ENCODE measurements at regions of chr13 and their contacts with region 1.

Region 1: GRCh38 chr13:81017513-81018152 is 676.7 kb upstream of the SPRY2 start:
- DNase-seq: no peak
- ATAC-seq: peak in 4 of 8 donors; percentile 44 to 67 (median 49)
- H3K4me3 ChIP-seq: peak overlapping the region in 3 of 10 donors; percentile 10 to 28 (median 20)
- H3K27ac ChIP-seq: no peak overlapping the region
- H3K4me1 ChIP-seq: peaks cover 0 to 6% (median 0%) of the 10 kb centered on the region in 9 donors
- H3K27me3 ChIP-seq: no peaks in the 10 kb centered on the region
- CTCF ChIP-seq: peak; percentile 23 to 82 (median 68)

Region 2: GRCh38 chr13:79679334-79679733 is 1338.3 kb before region 1 on chr13:
- intact Hi-C with region 1: loop called in 2 of 10 experiments (anchors 5 kb)
- DNase-seq: peak; percentile 44 to 77
- ATAC-seq: peak; percentile 53 to 76 (median 63)
- H3K4me3 ChIP-seq: no peak overlapping the region
- H3K27ac ChIP-seq: no peak overlapping the region
- H3K4me1 ChIP-seq: peaks cover 0 to 17% (median 0%) of the 10 kb centered on the region in 9 donors
- H3K27me3 ChIP-seq: no peaks in the 10 kb centered on the region
- CTCF ChIP-seq: peak; percentile 56 to 85 (median 78)

Region 3: GRCh38 chr13:79775830-79776229 is 1241.8 kb before region 1 on chr13:
- intact Hi-C with region 1: loop called in 1 of 10 experiments (anchors 10 kb)
- DNase-seq: peak in 1 of 2 donors; percentile 36
- ATAC-seq: peak in 7 of 8 donors; percentile 58 to 82 (median 71)
- H3K4me3 ChIP-seq: no peak overlapping the region
- H3K27ac ChIP-seq: no peak overlapping the region
- H3K4me1 ChIP-seq: peaks cover 0 to 19% (median 0%) of the 10 kb centered on the region in 9 donors
- H3K27me3 ChIP-seq: no peaks in the 10 kb centered on the region
- CTCF ChIP-seq: peak in 8 of 9 donors; percentile 37 to 76 (median 64)

Region 4: GRCh38 chr13:80979035-80979641 is 38.5 kb before region 1 on chr13:
- intact Hi-C with region 1: loop called in 3 of 10 experiments (anchors 2 to 5 kb)
- DNase-seq: peak in 1 of 2 donors; percentile 44
- ATAC-seq: peak in 3 of 8 donors; percentile 37 to 67 (median 55)
- H3K4me3 ChIP-seq: no peak overlapping the region
- H3K27ac ChIP-seq: no peak overlapping the region
- H3K4me1 ChIP-seq: peaks cover 0 to 3% (median 0%) of the 10 kb centered on the region in 9 donors
- H3K27me3 ChIP-seq: no peaks in the 10 kb centered on the region
- CTCF ChIP-seq: peak; percentile 72 to 94 (median 86)

Region 5: DNA sequence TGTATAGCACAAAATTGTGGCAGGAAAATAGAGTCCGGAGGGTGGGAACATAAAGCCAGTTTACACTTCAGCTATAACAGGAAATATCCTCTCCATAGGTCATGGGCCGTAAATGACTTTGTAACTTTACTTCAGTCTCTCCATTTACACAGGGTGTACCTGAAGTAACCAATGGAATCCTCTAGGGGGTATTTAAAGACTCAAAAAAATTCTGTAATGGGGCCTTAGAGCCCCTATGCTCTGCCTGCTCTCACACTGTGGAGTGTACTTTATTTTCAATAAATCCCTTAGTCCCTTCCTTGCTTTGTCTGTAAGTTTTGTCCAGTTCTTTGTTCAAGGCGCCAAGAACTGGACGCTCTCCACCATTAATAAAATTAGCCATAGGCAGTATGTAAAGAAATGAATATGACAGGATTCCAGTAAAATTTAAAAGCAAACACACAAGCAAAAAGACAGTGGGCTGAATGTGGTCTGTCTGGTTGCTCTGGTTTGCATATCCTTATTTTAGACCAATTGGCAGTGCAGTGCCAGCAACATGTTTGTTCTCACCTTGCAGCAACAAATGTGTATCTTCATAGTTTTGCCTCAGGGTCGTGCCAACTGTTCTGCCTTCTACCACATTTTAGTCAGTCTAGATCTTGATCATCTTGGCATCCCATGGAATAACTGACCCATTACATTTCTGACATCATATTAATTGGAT is 124.8 kb after region 1 on chr13:
- intact Hi-C with region 1: no loop called
- DNase-seq: no peak
- ATAC-seq: no peak
- H3K4me3 ChIP-seq: no peak overlapping the region
- H3K27ac ChIP-seq: no peak overlapping the region
- H3K4me1 ChIP-seq: no peaks in the 10 kb centered on the region
- H3K27me3 ChIP-seq: no peaks in the 10 kb centered on the region
- CTCF ChIP-seq: no peak

Region 6: DNA sequence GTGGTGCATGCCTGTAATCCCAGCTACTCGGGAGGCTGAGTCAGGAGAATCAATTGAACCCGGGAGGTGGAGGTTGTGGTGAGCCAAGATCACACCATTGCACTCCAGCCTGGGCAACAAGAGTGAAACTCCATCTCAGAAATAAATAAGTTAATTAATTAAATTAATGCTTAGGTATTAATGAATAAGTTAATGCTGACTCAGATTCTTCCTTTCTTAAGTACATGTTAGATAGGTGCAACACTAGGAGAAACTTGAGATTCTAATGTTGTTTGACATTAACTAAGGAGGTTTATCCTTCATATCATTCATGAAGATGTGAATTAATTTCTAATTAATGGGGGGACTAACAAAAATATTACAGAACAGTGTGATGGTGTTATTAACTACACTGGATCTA is 135.8 kb after region 1 on chr13:
- intact Hi-C with region 1: no loop called
- DNase-seq: no peak
- ATAC-seq: no peak
- H3K4me3 ChIP-seq: no peak overlapping the region
- H3K27ac ChIP-seq: no peak overlapping the region
- H3K4me1 ChIP-seq: no peaks in the 10 kb centered on the region
- H3K27me3 ChIP-seq: no peaks in the 10 kb centered on the region
- CTCF ChIP-seq: no peak

Region 7: DNA sequence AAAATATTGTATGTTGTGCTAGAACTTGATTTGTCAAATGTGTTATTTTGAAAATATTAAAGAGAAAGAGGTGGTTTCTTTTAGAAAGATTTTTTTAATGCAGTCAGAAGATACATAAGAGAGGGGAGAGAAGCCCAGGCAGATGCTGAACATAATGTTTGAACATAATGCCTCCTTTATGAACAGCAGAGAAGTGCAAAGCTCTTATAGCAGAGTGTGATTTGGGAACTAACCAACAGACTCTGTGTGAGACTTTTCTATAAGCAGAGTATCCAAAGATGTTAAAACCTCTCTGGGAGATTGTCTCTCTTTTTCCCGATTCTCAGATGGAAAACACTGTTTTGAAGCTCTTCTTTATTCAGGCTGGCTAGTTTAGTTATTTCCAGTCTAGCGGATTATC is 597.4 kb after region 1 on chr13:
- intact Hi-C with region 1: no loop called
- DNase-seq: no peak
- ATAC-seq: no peak
- H3K4me3 ChIP-seq: no peak overlapping the region
- H3K27ac ChIP-seq: no peak overlapping the region
- H3K4me1 ChIP-seq: no peaks in the 10 kb centered on the region
- H3K27me3 ChIP-seq: no peaks in the 10 kb centered on the region
- CTCF ChIP-seq: no peak

Region 8: GRCh38 chr13:81888855-81889254 is 871.2 kb after region 1 on chr13:
- intact Hi-C with region 1: no loop called
- DNase-seq: no peak
- ATAC-seq: peak in 1 of 8 donors; percentile 22
- H3K4me3 ChIP-seq: no peak overlapping the region
- H3K27ac ChIP-seq: no peak overlapping the region
- H3K4me1 ChIP-seq: no peaks in the 10 kb centered on the region
- H3K27me3 ChIP-seq: no peaks in the 10 kb centered on the region
- CTCF ChIP-seq: no peak